Stomach (tissue), 19 donors: ENCODE measurements at regions of chr11 and their contacts with region 1.

Region 1: GRCh38 chr11:15675683-15676082 is 561.0 kb downstream of the INSC start:
- DNase-seq: no peak
- H3K4me3 ChIP-seq: no peak overlapping the region
- H3K27ac ChIP-seq: no peak overlapping the region
- H3K4me1 ChIP-seq: peaks cover 0 to 4% (median 1%) of the 10 kb centered on the region in 4 donors
- H3K27me3 ChIP-seq: no peaks in the 10 kb centered on the region
- CTCF ChIP-seq: no peak
- EP300 ChIP-seq: no peak
- POLR2A ChIP-seq: no peak

Region 2: GRCh38 chr11:15629690-15630321 is 45.9 kb before region 1 on chr11:
- intact Hi-C with region 1: no loop called
- DNase-seq: peak; percentile 41 to 70
- H3K4me3 ChIP-seq: no peak overlapping the region
- H3K27ac ChIP-seq: no peak overlapping the region
- H3K4me1 ChIP-seq: no peaks in the 10 kb centered on the region
- H3K27me3 ChIP-seq: no peaks in the 10 kb centered on the region
- CTCF ChIP-seq: no peak
- EP300 ChIP-seq: no peak
- POLR2A ChIP-seq: no peak

Region 3: GRCh38 chr11:15703396-15703795 is 27.7 kb after region 1 on chr11:
- intact Hi-C with region 1: loop called (anchors 2 kb)
- DNase-seq: no peak
- H3K4me3 ChIP-seq: no peak overlapping the region
- H3K27ac ChIP-seq: no peak overlapping the region
- H3K4me1 ChIP-seq: peaks cover 7 to 13% (median 10%) of the 10 kb centered on the region in 4 donors
- H3K27me3 ChIP-seq: no peaks in the 10 kb centered on the region
- CTCF ChIP-seq: no peak
- EP300 ChIP-seq: no peak
- POLR2A ChIP-seq: no peak